HepG2 (cell line): ENCODE measurements at regions of chr18 and their contacts with region 1.

Region 1: GRCh38 chr18:30280880-30281470 is 761.6 kb downstream of the DSC3 start:
- DNase-seq: peak; percentile 42
- ATAC-seq: no peak
- H3K4me3 ChIP-seq: no peak overlapping the region
- H3K27ac ChIP-seq: no peak overlapping the region
- H3K4me1 ChIP-seq: no peaks in the 10 kb centered on the region
- H3K27me3 ChIP-seq: no peaks in the 10 kb centered on the region
- CTCF ChIP-seq: peak; percentile 58
- EP300 ChIP-seq: no peak
- POLR2A ChIP-seq: no peak
- RAD21 ChIP-seq: no peak

Region 2: DNA sequence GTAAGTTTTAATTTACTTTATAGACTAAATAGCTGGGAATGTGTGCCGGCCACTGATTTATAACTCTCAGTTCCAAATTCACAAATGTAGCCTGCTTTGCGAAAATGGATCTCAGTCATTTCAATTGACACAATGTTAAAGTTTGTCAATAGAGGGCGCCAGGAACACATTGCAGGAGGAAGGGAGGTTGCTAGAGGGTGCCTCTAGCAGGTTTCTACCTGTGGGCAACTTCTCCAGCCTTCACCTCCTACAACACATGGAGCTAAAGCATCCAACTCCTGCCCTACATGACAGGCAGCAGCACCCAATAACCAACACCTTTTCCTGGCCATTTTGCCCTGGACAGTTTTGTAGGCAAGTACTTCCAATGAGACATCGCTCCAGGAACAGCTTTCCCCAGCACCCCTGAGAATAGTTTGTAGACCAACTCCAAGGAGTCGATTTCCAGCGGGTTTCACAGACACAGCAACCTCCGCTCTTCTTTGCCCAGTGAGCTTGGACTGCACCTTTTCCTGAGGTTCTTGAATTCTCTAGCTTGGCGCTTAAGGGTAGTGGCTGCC is 1319.2 kb before region 1 on chr18:
- CTCF ChIA-PET with region 1: no interaction called
- POLR2A ChIA-PET with region 1: no interaction called
- in situ Hi-C with region 1: no loop called
- intact Hi-C with region 1: loop called (anchors 2 kb)
- DNase-seq: peak; percentile 36
- ATAC-seq: peak; percentile 86
- H3K4me3 ChIP-seq: no peak overlapping the region
- H3K27ac ChIP-seq: no peak overlapping the region
- H3K4me1 ChIP-seq: no peaks in the 10 kb centered on the region
- H3K27me3 ChIP-seq: no peaks in the 10 kb centered on the region
- CTCF ChIP-seq: peak; percentile 71
- EP300 ChIP-seq: no peak
- POLR2A ChIP-seq: no peak
- RAD21 ChIP-seq: no peak

Region 3: GRCh38 chr18:29874519-29875098 is 406.4 kb before region 1 on chr18:
- CTCF ChIA-PET with region 1: interaction called, 22 read pairs
- POLR2A ChIA-PET with region 1: no interaction called
- in situ Hi-C with region 1: loop called (anchors 5 kb)
- intact Hi-C with region 1: loop called (anchors 1 kb)
- DNase-seq: peak; percentile 52
- ATAC-seq: peak; percentile 52; the same call in 2 of the 3 replicates
- H3K4me3 ChIP-seq: no peak overlapping the region
- H3K27ac ChIP-seq: no peak overlapping the region
- H3K4me1 ChIP-seq: no peaks in the 10 kb centered on the region
- H3K27me3 ChIP-seq: no peaks in the 10 kb centered on the region
- CTCF ChIP-seq: peak; percentile 61
- EP300 ChIP-seq: no peak
- POLR2A ChIP-seq: no peak
- RAD21 ChIP-seq: peak; percentile 48

Region 4: GRCh38 chr18:29892960-29893558 is 387.9 kb before region 1 on chr18:
- CTCF ChIA-PET with region 1: interaction called, 6 read pairs
- POLR2A ChIA-PET with region 1: no interaction called
- in situ Hi-C with region 1: no loop called
- intact Hi-C with region 1: loop called (anchors 5 kb)
- DNase-seq: no peak
- ATAC-seq: no peak
- H3K4me3 ChIP-seq: no peak overlapping the region
- H3K27ac ChIP-seq: no peak overlapping the region
- H3K4me1 ChIP-seq: no peaks in the 10 kb centered on the region
- H3K27me3 ChIP-seq: no peaks in the 10 kb centered on the region; a peak in 1 of 5 replicates
- CTCF ChIP-seq: 0 out of 2 replicates have a peak, but pooled peaks have one; percentile 23
- EP300 ChIP-seq: no peak
- POLR2A ChIP-seq: no peak
- RAD21 ChIP-seq: no peak

Region 5: DNA sequence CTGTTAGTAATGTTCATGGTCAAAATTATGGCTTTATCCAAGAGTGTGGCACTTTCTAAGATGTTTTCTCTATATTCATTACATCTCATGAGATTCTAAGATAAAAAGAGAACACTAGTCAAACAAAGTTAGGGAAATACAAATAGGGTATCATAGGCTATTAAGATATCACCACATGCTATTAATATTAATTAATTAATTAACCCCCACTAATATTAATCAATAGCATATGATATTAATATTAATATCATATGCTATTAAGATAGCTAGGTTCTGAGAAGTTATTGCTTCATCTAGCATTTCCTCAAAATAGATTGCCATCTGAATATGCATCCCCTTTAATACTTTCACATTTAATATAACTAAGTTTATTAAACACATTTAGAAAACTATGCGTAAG is 1188.7 kb after region 1 on chr18:
- CTCF ChIA-PET with region 1: no interaction called
- POLR2A ChIA-PET with region 1: no interaction called
- in situ Hi-C with region 1: no loop called
- intact Hi-C with region 1: no loop called
- DNase-seq: no peak
- ATAC-seq: no peak
- H3K4me3 ChIP-seq: no peak overlapping the region
- H3K27ac ChIP-seq: no peak overlapping the region
- H3K4me1 ChIP-seq: no peaks in the 10 kb centered on the region
- H3K27me3 ChIP-seq: peaks cover 1 to 7% of the 10 kb centered on the region in 2 experiments; a peak in 1 of 5 replicates
- CTCF ChIP-seq: no peak
- EP300 ChIP-seq: no peak
- POLR2A ChIP-seq: no peak
- RAD21 ChIP-seq: no peak